GM10248 (cell line): ENCODE measurements at regions of chr1 and their contacts with region 1.

Region 1: DNA sequence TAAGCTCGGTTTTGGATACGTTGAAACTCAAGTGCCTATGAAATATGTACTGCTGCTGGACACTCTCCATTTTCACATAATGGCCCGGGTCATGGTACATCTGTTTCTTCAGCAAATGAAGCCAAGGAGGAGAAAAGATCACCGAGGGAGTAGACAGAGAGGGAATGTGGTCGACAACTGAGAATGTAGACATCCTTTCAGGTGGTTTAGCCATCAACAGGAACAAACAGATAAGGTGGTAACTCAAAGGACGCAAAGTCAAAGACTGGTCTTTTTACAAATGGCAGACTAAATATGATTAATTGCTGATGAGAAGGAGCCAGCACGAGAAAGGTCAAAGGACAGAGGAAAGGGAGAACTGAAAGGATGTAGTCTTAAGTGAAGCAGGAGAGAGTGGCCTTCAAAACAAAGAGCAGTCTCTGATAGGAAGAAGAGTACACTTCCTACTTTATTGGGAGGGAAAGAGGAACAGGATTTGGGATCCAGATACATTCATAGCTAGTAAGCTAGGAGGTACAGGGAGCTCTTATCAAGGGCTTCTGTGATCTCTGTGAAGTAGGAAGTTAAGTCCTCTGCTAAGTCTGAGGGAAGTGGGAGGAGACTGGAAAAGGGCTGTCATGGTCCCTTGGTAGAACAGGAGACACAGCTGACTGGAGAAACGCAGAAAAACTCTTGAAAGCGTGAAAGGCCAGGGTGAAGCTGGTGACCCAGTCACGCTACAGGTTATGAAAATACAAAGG is 28.3 kb downstream of the NUP133 start:
- DNase-seq: peak; percentile 62
- CTCF ChIP-seq: no peak

Region 2: DNA sequence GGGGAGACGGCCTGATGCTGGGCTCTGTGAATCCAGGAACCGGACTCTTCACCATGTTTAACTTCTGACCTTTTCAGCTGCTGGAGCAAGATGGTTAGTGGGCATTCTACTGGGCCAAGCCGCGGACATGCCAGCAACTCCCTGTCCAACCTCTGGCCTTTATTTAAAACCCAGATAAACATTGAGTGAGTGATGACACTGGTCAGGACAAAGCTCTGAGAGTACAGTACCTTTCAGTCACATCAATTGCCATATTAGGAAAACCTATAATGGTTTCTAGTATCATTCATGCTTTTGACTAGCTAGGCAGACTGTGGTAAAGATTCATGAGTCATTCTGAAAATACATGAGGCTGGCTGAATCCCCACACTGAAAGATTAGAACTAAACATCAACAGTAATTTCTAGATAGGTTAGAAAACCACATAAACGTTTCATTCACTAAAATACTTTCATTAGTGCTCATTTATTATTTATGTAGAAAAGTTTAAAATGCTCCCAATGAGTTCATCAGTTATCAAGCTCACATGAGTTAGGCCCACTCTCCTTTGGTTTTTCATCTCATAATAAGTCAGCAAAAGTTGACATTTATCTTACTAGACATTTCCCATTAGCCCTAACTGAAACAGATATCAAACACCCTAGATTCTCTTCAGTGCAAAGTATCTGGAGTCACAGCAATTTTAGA is 38.8 kb before region 1 on chr1:
- CTCF ChIA-PET with region 1: interaction called, 14 read pairs
- POLR2A ChIA-PET with region 1: no interaction called
- DNase-seq: peak; percentile 79
- CTCF ChIP-seq: no peak

Region 3: DNA sequence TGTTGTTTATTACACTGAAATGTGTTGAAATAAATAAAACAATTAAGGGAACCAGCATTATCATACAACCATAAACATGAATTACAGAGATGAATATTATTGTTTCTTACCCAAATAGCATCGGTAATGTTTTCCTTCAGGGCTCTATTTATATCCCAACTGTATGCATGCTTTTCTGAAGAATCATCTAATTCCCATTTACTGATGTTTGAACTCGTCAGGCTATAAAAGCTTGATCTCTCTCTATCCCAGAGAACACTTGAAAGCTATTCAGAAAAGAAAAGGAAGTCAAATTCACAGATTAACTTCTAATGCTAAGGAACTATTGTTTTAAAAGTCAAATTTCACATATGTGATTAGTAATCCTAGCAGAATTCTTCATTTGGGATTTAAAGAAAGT is 16.0 kb after region 1 on chr1:
- CTCF ChIA-PET with region 1: interaction called, 86 read pairs
- POLR2A ChIA-PET with region 1: no interaction called
- DNase-seq: no peak
- CTCF ChIP-seq: no peak

Region 4: DNA sequence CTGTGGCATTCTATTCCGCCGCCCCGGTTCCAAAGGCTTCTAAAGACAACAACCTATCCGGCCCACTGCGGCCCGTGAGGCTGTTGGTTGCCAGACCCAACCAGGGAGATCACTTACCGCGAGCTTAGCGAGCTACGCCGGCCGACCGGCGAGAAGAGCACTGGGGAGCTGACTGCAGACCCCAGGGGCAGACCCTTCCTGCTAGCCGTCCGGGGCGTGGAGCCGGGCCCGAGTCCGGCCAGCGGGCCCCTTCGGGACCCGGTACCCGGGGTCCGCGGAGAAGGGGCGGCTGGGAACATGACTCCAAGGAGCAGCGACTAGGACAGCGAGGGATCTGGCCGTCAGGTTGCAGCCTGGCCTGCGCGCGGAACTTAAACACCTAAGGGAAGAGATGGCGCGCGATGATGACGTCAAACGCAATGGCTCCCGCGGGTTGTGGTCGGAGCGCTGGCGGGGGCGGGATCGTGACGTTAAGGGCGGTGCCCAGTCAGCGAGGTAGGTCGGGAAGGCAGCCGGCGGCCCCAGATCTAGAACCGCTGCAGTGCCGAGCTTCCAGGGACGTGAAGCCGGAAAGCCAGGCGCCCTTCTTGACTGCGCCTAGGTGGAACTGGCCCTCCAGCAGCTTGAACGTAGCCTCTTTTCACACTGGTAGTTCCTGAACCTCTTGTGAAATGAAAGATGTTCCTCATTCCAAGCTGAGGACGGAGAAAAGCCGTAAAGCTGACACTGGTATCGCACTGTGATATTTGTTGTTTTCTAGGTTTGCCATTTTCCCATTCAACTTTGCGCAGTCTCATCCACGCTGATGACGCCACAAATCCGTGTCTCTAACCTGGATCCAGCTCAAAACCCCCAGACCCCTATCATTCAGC is 28.4 kb after region 1 on chr1 and contains the start of gene NUP133:
- CTCF ChIA-PET with region 1: interaction called, 14 read pairs
- POLR2A ChIA-PET with region 1: no interaction called
- DNase-seq: peak; percentile 95
- CTCF ChIP-seq: no peak